ENCODE measurements at regions of chr7 and their contacts with region 1.

Region 1: GRCh38 chr7:155009570-155010157 is 6.7 kb upstream of the PAXIP1 start:
- DNase-seq: no peak
- ATAC-seq: peak; percentile 77
- H3K4me3 ChIP-seq: no peak overlapping the region
- H3K27ac ChIP-seq: no peak overlapping the region
- H3K4me1 ChIP-seq: no peaks in the 10 kb centered on the region
- H3K27me3 ChIP-seq: no peaks in the 10 kb centered on the region
- CTCF ChIP-seq: peak; percentile 34 to 56 (median 50); a peak in 5 of 6 replicates
- EP300 ChIP-seq: no peak
- POLR2A ChIP-seq: no peak
- RAD21 ChIP-seq: peak; percentile 33; the same call in 1 of the 2 replicates

Region 2: DNA sequence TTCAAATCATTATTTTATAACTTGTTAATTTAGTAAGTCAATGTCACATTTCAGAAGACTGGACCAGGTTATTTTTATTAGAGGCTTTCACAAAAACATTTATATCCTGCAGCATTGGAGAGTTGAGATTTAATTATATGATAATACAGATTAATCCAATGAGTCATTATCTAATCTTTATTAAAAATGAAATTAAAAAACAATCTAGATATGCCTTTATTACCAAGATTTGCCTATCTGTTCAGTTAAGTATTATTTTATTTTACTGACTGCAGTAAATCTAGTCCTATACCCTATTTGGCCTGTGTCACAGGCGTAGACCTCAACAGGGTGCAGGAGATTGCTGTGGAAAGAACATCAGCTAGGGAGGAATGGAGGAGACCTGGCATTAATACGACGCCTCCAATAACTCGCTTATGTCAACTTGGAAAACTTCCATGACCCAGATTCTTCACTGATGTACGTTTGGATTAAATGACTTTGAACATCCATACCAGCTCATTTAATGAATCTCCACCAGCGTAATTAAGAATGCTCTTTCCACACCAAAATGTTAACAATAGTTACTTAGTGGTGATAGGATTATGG is 25.0 kb before region 1 on chr7:
- CTCF ChIA-PET with region 1: interaction called, 16 read pairs
- POLR2A ChIA-PET with region 1: no interaction called
- RAD21 ChIA-PET with region 1: no interaction called
- SMC1A ChIA-PET with region 1: interaction called, 5 read pairs
- in situ Hi-C with region 1: no loop called
- intact Hi-C with region 1: no loop called
- DNase-seq: no peak
- ATAC-seq: no peak
- H3K4me3 ChIP-seq: no peak overlapping the region
- H3K27ac ChIP-seq: no peak overlapping the region
- H3K4me1 ChIP-seq: no peaks in the 10 kb centered on the region
- H3K27me3 ChIP-seq: no peaks in the 10 kb centered on the region
- CTCF ChIP-seq: no peak
- EP300 ChIP-seq: no peak
- POLR2A ChIP-seq: no peak
- RAD21 ChIP-seq: no peak

Region 3: DNA sequence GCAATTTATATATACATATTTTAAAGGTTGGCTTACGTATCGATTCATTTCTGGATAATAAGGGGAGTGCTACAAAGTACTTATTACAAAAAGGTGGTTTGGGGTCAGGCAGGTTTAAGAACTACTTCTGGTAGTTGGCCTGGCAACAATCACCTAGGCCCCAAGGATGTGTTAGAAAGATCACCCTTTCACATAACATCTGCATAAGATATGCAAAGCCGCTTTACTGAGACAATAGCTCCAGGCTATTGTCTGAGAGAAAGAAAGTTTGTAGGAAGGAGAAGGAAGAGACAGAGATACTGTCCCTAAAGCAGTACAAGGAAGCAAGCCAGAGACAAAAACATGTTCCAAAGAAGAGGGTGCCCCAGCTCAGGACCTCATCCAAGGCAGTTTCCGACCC is 12.9 kb before region 1 on chr7:
- CTCF ChIA-PET with region 1: interaction called, 31 read pairs
- POLR2A ChIA-PET with region 1: no interaction called
- RAD21 ChIA-PET with region 1: no interaction called
- SMC1A ChIA-PET with region 1: interaction called, 3 read pairs
- in situ Hi-C with region 1: no loop called
- intact Hi-C with region 1: no loop called
- DNase-seq: no peak
- ATAC-seq: no peak
- H3K4me3 ChIP-seq: no peak overlapping the region
- H3K27ac ChIP-seq: no peak overlapping the region
- H3K4me1 ChIP-seq: 0 out of 2 replicates have a peak, but pooled peaks cover 5% of the 10 kb centered on the region
- H3K27me3 ChIP-seq: no peaks in the 10 kb centered on the region
- CTCF ChIP-seq: no peak
- EP300 ChIP-seq: no peak
- POLR2A ChIP-seq: no peak
- RAD21 ChIP-seq: no peak